HEK293 (cell line): ENCODE measurements at regions of chr14 and their contacts with region 1.

Region 1: DNA sequence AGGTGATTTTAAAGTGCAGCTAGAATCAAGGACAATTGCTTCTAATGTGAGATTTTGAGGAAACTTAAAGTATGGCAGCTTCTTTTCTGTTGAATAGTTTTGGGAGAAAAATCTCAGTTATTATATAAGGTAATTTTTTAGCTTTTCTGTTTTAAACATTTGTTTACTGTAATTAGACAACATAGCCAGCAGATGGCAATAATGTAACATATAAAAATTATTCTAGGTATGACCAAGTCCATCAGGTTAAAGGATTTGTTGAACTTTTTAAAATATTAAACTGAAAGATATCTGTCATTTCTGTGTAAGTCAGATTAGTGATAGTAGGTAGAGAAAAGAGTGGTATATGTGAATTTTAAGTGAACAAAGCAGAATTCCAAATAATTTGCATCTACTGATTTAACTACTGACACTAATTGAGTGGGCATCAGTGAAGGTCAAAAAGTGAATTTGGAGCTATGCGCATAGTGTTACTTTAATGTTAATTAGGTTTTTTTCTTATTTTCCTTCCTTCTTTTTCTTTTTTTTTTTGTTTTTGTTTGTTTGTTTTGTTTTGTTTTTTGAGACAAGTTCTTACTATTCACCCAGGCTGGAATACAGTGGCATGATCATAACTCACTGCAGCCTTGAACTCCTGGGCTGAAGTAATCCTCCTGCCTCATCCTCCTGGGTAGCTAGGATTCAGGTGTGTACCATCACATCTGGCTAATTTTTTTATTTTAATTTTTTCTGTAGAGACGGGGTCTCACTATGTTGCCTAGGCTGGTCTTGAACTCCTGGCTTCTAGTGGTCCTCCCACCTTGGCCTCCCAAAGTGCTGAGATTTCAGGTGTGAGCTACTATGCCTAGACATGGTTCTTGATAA is 18.6 kb downstream of the PRORP start:
- H3K4me3 ChIP-seq: no peak overlapping the region
- H3K27ac ChIP-seq: no peak overlapping the region
- H3K4me1 ChIP-seq: no peaks in the 10 kb centered on the region
- CTCF ChIP-seq: no peak

Region 2: DNA sequence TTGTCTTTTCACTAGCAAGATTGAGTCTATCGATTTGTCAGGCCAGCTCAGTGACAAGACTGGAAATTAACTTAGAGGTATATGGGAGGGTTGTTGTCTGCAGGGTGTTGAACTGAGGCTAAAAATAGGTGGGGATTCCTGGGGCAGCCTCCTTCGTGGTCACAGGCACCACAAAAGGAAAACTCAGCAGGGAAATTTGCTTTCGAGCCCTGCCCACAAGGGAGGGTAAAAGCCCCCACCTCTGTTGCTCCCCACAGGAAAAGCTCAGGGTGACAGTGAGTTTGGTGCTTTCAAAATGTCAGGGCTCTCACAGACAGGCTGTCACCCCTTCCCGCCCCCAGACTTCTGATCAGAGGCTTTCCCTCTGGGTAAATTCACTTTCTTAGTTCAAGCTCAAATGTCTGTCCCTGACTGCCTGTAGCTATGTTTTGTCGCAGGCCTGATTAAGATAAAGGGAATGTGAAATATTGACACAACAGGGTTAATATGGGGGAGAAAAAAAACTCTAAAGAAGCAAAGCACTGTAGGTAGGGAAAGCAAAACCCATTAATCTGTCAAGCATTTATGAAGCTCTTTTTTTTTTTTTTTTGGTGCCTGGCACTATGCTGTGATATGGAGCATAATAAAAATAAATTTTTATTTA is 275.3 kb after region 1 on chr14:
- CTCF ChIA-PET with region 1: interaction called, 70 read pairs
- POLR2A ChIA-PET with region 1: no interaction called
- H3K4me3 ChIP-seq: no peak overlapping the region
- H3K27ac ChIP-seq: no peak overlapping the region
- H3K4me1 ChIP-seq: peaks cover 3% of the 10 kb centered on the region
- CTCF ChIP-seq: no peak

Region 3: GRCh38 chr14:35423621-35424020 is 282.7 kb after region 1 on chr14:
- CTCF ChIA-PET with region 1: interaction called, 15 read pairs
- POLR2A ChIA-PET with region 1: no interaction called
- H3K4me3 ChIP-seq: no peak overlapping the region
- H3K27ac ChIP-seq: no peak overlapping the region
- H3K4me1 ChIP-seq: peaks cover 3% of the 10 kb centered on the region
- CTCF ChIP-seq: no peak